ENCODE measurements at regions of chr15 and their contacts with region 1.

Region 1: GRCh38 chr15:84609818-84610525 is 9.2 kb downstream of the ZSCAN2 start:
- DNase-seq: no peak
- H3K4me3 ChIP-seq: no peak overlapping the region
- H3K27ac ChIP-seq: no peak overlapping the region
- H3K4me1 ChIP-seq: peaks cover 2 to 20% (median 15%) of the 10 kb centered on the region in 4 experiments; a peak in 6 of 7 replicates
- H3K27me3 ChIP-seq: no peaks in the 10 kb centered on the region
- CTCF ChIP-seq: no peak
- EP300 ChIP-seq: no peak
- POLR2A ChIP-seq: no peak
- RAD21 ChIP-seq: no peak

Region 2: GRCh38 chr15:84552896-84553295 is 57.1 kb before region 1 on chr15:
- CTCF ChIA-PET with region 1: no interaction called
- POLR2A ChIA-PET with region 1: no interaction called
- DNase-seq: no peak
- H3K4me3 ChIP-seq: no peak overlapping the region
- H3K27ac ChIP-seq: no peak overlapping the region
- H3K4me1 ChIP-seq: no peaks in the 10 kb centered on the region
- H3K27me3 ChIP-seq: peaks cover 0 to 1% (median 0%) of the 10 kb centered on the region in 4 experiments; a peak in 1 of 7 replicates
- CTCF ChIP-seq: no peak
- EP300 ChIP-seq: no peak
- POLR2A ChIP-seq: no peak
- RAD21 ChIP-seq: no peak

Region 3: GRCh38 chr15:84588053-84588874 is 21.7 kb before region 1 on chr15:
- CTCF ChIA-PET with region 1: interaction called, 10 read pairs
- POLR2A ChIA-PET with region 1: no interaction called
- DNase-seq: peak; percentile 70 to 94
- H3K4me3 ChIP-seq: peak overlapping the region in 2 of 4 experiments; percentile 10 to 46; a peak in 4 of 8 replicates
- H3K27ac ChIP-seq: no peak overlapping the region
- H3K4me1 ChIP-seq: peaks cover 0 to 11% (median 0%) of the 10 kb centered on the region in 4 experiments; a peak in 2 of 7 replicates
- H3K27me3 ChIP-seq: no peaks in the 10 kb centered on the region
- CTCF ChIP-seq: peak; percentile 67 to 87 (median 82)
- EP300 ChIP-seq: no peak
- POLR2A ChIP-seq: no peak
- RAD21 ChIP-seq: peak; percentile 86 to 87

Region 4: GRCh38 chr15:84621358-84621979 is 11.5 kb after region 1 on chr15:
- CTCF ChIA-PET with region 1: interaction called, 21 read pairs
- POLR2A ChIA-PET with region 1: interaction called, 176 read pairs
- DNase-seq: no peak
- H3K4me3 ChIP-seq: peak overlapping the region in 1 of 4 experiments; percentile 2; a peak in 2 of 8 replicates
- H3K27ac ChIP-seq: no peak overlapping the region
- H3K4me1 ChIP-seq: no peaks in the 10 kb centered on the region
- H3K27me3 ChIP-seq: no peaks in the 10 kb centered on the region; a peak in 1 of 7 replicates
- CTCF ChIP-seq: no peak
- EP300 ChIP-seq: no peak
- POLR2A ChIP-seq: no peak
- RAD21 ChIP-seq: no peak

Region 5: DNA sequence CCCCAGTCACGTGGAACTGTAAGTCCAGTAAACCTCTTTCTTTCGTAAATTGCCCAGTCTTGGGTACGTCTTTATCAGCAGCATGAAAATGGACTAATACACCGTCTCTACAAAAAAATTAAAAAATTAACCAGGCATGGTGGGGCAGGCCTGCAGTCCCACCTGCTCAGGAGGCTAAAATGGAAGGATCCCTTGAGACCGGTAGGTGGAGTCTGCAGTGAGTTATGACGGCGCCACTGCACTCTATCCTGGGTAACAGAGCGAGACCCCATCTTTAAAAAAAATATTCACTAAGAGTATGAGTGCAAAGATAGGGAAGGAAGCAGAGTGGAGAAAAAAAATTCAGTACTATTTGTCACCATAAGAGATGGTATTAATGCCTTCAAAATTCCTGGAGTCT is 80.4 kb after region 1 on chr15:
- CTCF ChIA-PET with region 1: no interaction called
- POLR2A ChIA-PET with region 1: no interaction called
- DNase-seq: no peak
- H3K4me3 ChIP-seq: no peak overlapping the region
- H3K27ac ChIP-seq: no peak overlapping the region
- H3K4me1 ChIP-seq: no peaks in the 10 kb centered on the region
- H3K27me3 ChIP-seq: no peaks in the 10 kb centered on the region
- CTCF ChIP-seq: no peak
- EP300 ChIP-seq: no peak
- POLR2A ChIP-seq: no peak
- RAD21 ChIP-seq: no peak

Measured in H1 (cell line).